ENCODE measurements at regions of chrX and their contacts with region 1.

Region 1: GRCh38 chrX:40097497-40098263 is at the start of gene BCOR:
- DNase-seq: peak; percentile 54 to 78 (median 72)
- ATAC-seq: peak; percentile 58
- H3K4me3 ChIP-seq: peak within 1 kb of the TSS; percentile 74
- H3K4me3 Mint-ChIP-seq: peak within 1 kb of the TSS; percentile 88 to 98 (median 92)
- H3K27ac ChIP-seq: peak within 1 kb of the TSS; percentile 80
- H3K27ac Mint-ChIP-seq: peak within 1 kb of the TSS; percentile 82 to 93 (median 89)
- H3K4me1 ChIP-seq: peaks cover 5 to 12% of the 10 kb centered on the region in 2 donors
- H3K4me1 Mint-ChIP-seq: peaks cover 12 to 34% (median 25%) of the 10 kb centered on the region in 7 donors
- H3K27me3 ChIP-seq: no peaks in the 10 kb centered on the region
- H3K27me3 Mint-ChIP-seq: no peaks in the 10 kb centered on the region
- total RNA-seq, gene BCOR: 23.3 to 55.2 (median 43.3) TPM

Region 2: DNA sequence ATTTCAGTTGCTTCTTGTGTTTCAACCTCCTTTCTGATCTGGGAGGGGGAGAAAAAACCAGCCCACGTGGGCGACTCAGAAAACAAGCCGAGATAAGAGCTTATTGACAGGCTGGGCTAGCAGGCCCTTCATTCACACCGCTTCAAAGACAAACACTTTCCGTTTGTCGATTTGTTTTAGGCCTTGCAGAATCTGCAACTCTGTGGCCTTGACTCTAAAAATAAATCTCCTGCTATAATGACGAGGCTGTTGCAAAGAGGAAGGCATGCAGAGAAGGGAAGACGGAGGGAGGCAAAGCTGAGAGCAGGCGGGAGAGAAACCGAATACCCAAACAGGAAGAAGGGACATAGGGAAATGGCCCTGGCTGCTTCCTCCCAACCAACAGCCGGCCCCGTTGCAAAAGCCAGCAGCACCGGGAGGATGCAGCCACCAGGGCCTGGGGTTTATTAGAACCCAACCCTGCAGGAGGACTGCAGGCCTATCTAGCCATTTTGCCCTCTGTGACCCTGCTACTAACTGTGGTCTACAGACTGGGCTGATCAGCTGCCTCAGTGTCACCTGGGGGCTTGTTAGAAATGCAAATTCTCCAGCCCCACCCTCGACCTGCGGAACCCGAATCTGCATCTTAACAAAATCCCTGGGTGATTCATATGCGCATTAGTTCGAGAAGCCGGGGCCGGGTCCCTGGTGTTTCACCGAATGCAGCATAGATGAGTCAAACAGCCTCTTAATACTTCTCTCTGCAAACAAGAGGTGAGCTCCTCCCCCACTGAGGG is 325.4 kb before region 1 on chrX:
- CTCF ChIA-PET with region 1: no interaction called
- POLR2A ChIA-PET with region 1: interaction called, 4 read pairs
- intact Hi-C with region 1: loop called (anchors 5 kb)
- DNase-seq: peak in 6 of 9 donors; percentile 18 to 52 (median 30)
- ATAC-seq: peak; percentile 63
- H3K4me3 ChIP-seq: peak overlapping the region; percentile 17
- H3K4me3 Mint-ChIP-seq: peak overlapping the region; percentile 43 to 80 (median 74)
- H3K27ac ChIP-seq: peak overlapping the region; percentile 43
- H3K27ac Mint-ChIP-seq: peak overlapping the region; percentile 86 to 98 (median 94)
- H3K4me1 ChIP-seq: peaks cover 26 to 32% of the 10 kb centered on the region in 2 donors
- H3K4me1 Mint-ChIP-seq: peaks cover 20 to 50% (median 43%) of the 10 kb centered on the region in 7 donors
- H3K27me3 ChIP-seq: no peaks in the 10 kb centered on the region
- H3K27me3 Mint-ChIP-seq: no peaks in the 10 kb centered on the region

Region 3: DNA sequence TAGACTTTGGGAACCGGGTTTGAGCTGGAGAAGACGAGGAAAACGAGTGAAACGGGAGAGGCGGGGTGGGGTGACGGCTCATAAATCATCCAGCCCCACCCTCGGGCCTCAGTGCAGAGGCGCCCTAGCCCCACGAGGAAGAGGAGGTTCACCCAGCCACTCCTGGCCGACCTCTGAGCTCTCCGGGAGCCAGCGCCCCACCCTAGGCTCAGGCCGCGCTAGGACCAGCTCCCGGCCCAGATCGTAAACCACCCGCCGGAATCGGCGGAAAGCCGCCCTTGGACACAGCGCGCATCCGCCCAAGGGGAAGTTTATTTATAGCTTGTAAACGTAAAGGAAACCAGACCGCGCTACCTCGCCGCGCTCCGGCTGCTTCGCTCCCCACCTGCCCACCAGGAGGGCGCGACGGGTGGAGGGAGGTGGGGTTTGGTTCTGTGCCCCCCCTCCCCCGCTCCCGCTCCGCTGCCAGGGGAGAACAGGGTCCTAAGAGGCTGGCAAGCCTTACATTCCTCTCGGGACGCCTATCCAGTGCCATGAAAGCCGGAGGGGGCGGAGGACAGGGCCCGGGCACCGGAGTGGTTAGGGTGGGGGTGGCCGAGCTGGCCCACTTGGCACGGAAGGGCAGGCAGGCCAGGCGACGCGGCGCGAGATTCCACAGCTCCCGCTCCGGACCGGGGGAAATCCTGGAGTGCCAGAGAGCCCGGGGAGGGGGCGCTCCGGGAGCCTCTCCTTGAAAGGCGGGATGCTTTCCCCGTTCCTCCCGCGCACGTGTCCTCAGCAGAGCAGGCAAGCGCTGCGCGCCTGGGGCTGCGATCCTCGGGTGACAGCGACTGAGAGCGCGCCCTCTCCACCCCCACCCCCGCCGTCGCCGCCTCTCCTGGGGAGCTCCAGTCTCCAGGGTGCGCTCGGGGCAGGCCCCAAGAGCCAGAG is 84.1 kb before region 1 on chrX:
- CTCF ChIA-PET with region 1: no interaction called
- POLR2A ChIA-PET with region 1: interaction called, 9 read pairs
- intact Hi-C with region 1: loop called (anchors 2 kb)
- DNase-seq: peak in 2 of 9 donors; percentile 18 to 53
- ATAC-seq: peak; percentile 42
- H3K4me3 ChIP-seq: peak overlapping the region; percentile 51
- H3K4me3 Mint-ChIP-seq: peak overlapping the region; percentile 70 to 87 (median 75)
- H3K27ac ChIP-seq: no peak overlapping the region
- H3K27ac Mint-ChIP-seq: peak overlapping the region in 2 of 9 donors; percentile 43 to 83
- H3K4me1 ChIP-seq: peaks cover 0 to 31% of the 10 kb centered on the region in 2 donors
- H3K4me1 Mint-ChIP-seq: peaks cover 5 to 35% (median 24%) of the 10 kb centered on the region in 7 donors
- H3K27me3 ChIP-seq: no peaks in the 10 kb centered on the region
- H3K27me3 Mint-ChIP-seq: peaks cover 0 to 24% (median 0%) of the 10 kb centered on the region in 5 donors

Region 4: DNA sequence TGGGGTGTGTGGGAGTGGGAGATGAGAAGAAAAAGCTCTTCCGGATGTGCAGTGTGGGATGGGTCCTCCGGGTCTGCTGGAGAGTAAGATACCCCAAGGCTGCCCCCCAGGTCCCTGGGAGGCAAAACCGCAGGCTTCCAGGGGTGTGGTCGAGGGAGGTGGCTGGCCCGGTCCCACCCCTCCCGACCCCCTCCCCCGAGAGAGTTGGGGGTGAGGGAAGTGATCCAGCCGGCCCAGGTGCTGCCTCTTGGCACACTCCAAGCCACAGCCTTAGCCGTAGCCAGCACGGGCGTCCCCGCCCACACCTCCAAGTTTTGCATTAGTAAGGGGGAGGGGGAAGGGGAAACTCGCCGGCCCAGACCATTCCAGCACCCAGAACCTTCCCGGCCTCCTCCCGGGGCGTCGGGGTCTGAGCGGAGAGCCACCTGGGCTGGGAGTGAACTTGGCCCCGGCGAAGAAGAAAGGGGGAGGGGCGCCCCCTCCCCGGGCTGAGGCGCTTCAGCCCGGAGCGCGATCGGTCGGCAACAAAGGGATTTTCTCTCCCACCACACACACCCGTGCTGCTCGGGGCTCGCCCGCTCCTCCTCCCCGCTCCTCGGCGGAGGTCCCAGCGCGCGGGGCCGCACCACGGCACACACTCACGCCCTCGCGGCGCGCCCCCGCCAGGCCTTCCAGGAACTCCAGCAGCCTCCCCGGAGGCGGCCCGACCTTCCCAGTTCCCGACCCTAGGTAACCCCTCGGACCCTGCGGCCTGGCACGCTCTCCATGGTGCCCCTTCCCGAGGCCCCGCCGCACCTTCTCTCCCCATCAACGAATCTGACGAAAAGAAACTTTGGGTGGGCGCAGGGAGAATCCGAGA is 14.3 kb before region 1 on chrX:
- CTCF ChIA-PET with region 1: no interaction called
- POLR2A ChIA-PET with region 1: interaction called, 11 read pairs
- intact Hi-C with region 1: loop called in 1 of 2 experiments (anchors 1 kb)
- DNase-seq: peak in 1 of 9 donors; percentile 25
- ATAC-seq: peak; percentile 61
- H3K4me3 ChIP-seq: peak overlapping the region; percentile 37
- H3K4me3 Mint-ChIP-seq: peak overlapping the region; percentile 75 to 88 (median 84)
- H3K27ac ChIP-seq: peak overlapping the region; percentile 47
- H3K27ac Mint-ChIP-seq: peak overlapping the region in 3 of 9 donors; percentile 33 to 70 (median 51)
- H3K4me1 ChIP-seq: peaks cover 5 to 32% of the 10 kb centered on the region in 2 donors
- H3K4me1 Mint-ChIP-seq: peaks cover 13 to 81% (median 62%) of the 10 kb centered on the region in 7 donors
- H3K27me3 ChIP-seq: no peaks in the 10 kb centered on the region
- H3K27me3 Mint-ChIP-seq: no peaks in the 10 kb centered on the region

Region 5: DNA sequence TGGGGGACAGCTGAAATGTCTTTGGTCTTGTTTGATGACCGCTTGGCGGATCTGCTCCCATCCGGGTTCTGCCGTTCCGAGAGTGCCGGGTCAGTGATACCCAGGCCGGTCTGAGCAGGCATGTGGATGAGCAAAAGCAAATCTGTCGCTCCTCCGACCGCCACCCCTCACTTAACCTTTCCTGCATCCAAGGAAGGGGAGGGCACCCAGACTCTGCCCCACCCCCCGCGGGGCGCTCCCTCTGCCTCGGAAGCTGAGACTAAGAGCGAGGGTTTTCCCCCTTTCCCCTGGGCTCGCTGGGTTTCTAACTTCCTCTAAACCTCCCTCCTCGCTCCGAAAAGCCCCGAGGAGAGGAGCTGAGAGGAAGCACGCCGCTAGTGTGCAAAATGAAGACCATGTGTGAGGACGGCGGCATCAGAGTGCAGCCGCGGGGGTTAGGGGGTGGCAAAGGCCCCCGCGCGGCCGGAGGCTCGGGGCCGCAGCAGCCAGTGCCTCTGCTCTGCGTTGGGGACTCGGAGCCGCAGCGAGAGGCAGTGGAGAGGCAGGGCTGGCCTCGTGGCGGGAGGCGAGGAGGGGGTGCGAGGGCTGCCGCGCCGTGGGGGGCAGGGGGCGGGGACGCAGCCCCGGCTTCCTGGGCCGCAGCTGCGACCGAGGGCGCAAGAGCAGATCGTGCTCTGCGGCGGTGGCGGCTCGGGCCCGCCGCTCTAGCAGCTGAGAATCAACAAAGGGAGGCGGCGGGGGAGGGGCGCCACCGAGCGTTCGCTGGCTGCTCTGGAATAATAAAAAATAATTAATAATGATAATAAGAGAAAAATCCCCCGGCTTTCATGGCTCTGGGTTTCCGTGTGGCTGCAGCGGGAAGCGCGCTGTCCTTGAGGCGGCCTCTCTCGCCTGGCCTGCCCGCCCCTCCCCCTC is 55.9 kb after region 1 on chrX:
- CTCF ChIA-PET with region 1: interaction called, 8 read pairs
- POLR2A ChIA-PET with region 1: interaction called, 44 read pairs
- intact Hi-C with region 1: loop called in 1 of 2 experiments (anchors 1 kb)
- DNase-seq: peak in 4 of 9 donors; percentile 32 to 75 (median 56)
- ATAC-seq: peak; percentile 70
- H3K4me3 ChIP-seq: peak overlapping the region; percentile 50
- H3K4me3 Mint-ChIP-seq: peak overlapping the region; percentile 81 to 88 (median 84)
- H3K27ac ChIP-seq: peak overlapping the region; percentile 27
- H3K27ac Mint-ChIP-seq: peak overlapping the region in 7 of 9 donors; percentile 39 to 84 (median 70)
- H3K4me1 ChIP-seq: peaks cover 0 to 4% of the 10 kb centered on the region in 2 donors
- H3K4me1 Mint-ChIP-seq: peaks cover 0 to 22% (median 14%) of the 10 kb centered on the region in 7 donors
- H3K27me3 ChIP-seq: no peaks in the 10 kb centered on the region
- H3K27me3 Mint-ChIP-seq: peaks cover 0 to 8% (median 0%) of the 10 kb centered on the region in 5 donors

Region 6: DNA sequence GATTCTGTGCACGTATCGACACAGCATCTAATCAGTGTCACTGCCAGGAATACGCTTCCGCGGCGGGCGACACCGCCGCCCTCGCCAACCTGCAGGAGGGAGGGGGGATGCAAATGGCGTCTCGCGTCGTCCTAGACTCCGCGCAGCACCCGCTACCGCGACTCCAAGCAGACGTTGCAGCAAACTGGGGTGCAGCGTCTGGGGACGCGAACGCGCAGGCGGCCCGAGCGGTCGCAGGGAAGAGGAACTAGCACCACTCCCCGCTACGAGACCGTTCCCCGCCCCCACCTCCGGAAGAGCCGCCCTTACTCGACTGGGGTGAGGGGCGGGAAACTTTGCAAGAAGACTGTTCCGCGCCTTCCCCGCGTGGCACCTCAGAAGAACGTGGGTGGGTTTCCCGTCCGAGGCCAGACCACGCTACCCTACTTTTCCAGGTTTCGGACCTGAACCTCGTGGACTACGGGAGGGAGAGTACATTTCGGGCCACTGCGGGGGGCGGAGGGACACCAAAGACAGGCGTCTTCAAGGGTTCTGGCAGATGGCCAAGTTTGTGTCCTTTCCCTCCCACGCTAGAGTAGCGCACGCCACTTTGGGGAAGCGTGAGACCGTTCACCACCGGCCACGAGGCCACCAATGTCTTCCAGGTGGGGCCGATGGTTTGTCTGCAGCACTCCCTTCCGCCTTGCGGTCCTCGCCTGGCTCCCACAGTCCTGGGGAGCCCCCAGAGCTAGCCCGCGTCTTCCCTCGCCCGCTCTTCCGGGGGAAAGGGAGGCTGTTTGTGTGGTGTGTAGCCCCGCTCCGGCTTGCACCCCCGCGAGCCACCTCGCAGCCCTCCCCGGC is 78.1 kb after region 1 on chrX:
- CTCF ChIA-PET with region 1: no interaction called
- POLR2A ChIA-PET with region 1: interaction called, 116 read pairs
- intact Hi-C with region 1: loop called (anchors 1 to 2 kb)
- DNase-seq: peak; percentile 60 to 91 (median 83)
- ATAC-seq: peak; percentile 58
- H3K4me3 ChIP-seq: peak overlapping the region; percentile 73
- H3K4me3 Mint-ChIP-seq: peak overlapping the region; percentile 89 to 93 (median 90)
- H3K27ac ChIP-seq: peak overlapping the region; percentile 98
- H3K27ac Mint-ChIP-seq: peak overlapping the region; percentile 96 to 100 (median 98)
- H3K4me1 ChIP-seq: peaks cover 13 to 18% of the 10 kb centered on the region in 2 donors
- H3K4me1 Mint-ChIP-seq: peaks cover 5 to 46% (median 36%) of the 10 kb centered on the region in 7 donors
- H3K27me3 ChIP-seq: no peaks in the 10 kb centered on the region
- H3K27me3 Mint-ChIP-seq: no peaks in the 10 kb centered on the region

Region 7: DNA sequence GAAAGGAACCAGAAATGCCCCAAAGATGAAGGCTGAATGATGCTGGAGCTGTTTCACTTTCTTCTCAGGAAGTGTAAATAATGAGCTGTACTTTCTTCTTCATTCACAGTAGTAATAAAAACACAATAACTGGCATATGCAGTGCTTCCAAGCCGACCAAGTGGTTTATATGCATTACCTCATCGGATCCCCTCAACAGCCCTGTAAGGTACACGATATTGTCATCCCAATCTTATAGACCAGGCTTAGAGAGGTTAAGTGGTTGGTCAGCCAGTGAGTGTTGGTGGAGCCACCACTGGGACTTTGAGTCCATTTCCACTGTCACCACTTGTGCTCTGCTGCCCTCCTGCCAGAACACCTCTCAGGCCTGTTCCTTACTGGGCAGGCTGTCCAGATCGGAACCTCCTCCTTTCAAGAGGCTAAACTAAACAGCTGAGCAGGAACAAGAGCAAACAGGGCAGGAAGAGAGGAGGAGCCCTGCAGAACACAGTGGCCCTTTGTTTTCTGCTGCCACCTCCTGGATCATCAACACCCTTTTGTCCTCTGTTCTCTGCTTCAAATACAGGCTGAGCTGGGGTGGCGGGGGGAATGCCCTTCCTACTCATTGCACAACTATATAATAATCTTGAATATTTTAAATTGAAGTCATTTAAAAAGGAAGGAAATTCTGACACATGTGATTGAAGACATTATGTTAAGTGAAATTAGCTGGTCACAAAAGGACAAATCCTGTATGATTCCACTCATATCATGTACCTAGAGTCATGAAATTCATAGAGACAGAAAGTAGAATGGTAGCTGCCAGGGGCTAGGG is 370.6 kb after region 1 on chrX:
- CTCF ChIA-PET with region 1: no interaction called
- POLR2A ChIA-PET with region 1: no interaction called
- intact Hi-C with region 1: loop called in 1 of 2 experiments (anchors 5 kb)
- DNase-seq: peak in 5 of 9 donors; percentile 22 to 40 (median 31)
- ATAC-seq: peak; percentile 72
- H3K4me3 ChIP-seq: no peak overlapping the region
- H3K4me3 Mint-ChIP-seq: peak overlapping the region in 6 of 10 donors; percentile 8 to 73 (median 38)
- H3K27ac ChIP-seq: no peak overlapping the region
- H3K27ac Mint-ChIP-seq: peak overlapping the region in 2 of 9 donors; percentile 14 to 69
- H3K4me1 ChIP-seq: peaks cover 0 to 13% of the 10 kb centered on the region in 2 donors
- H3K4me1 Mint-ChIP-seq: peaks cover 14 to 40% (median 33%) of the 10 kb centered on the region in 7 donors
- H3K27me3 ChIP-seq: no peaks in the 10 kb centered on the region
- H3K27me3 Mint-ChIP-seq: no peaks in the 10 kb centered on the region

Measured in naive thymus-derived CD4-positive, alpha-beta T cell (primary cell).